ENCODE measurements at regions of chr9 and their contacts with region 1.

Region 1: GRCh38 chr9:123225374-123225813 is 43.0 kb downstream of the STRBP start:
- DNase-seq: peak; percentile 32
- H3K4me3 ChIP-seq: no peak overlapping the region
- H3K27ac ChIP-seq: no peak overlapping the region
- H3K4me1 ChIP-seq: no peaks in the 10 kb centered on the region
- H3K27me3 ChIP-seq: no peaks in the 10 kb centered on the region
- CTCF ChIP-seq: peak in 3 of 4 experiments; percentile 43 to 53 (median 48)
- POLR2A ChIP-seq: no peak

Region 2: GRCh38 chr9:123102375-123103110 is 122.9 kb before region 1 on chr9:
- intact Hi-C with region 1: loop called (anchors 5 kb)
- DNase-seq: peak; percentile 36
- H3K4me3 ChIP-seq: no peak overlapping the region
- H3K27ac ChIP-seq: no peak overlapping the region
- H3K4me1 ChIP-seq: peaks cover 5% of the 10 kb centered on the region
- H3K27me3 ChIP-seq: no peaks in the 10 kb centered on the region
- CTCF ChIP-seq: peak in 3 of 4 experiments; percentile 38 to 59 (median 51)
- POLR2A ChIP-seq: no peak

Region 3: DNA sequence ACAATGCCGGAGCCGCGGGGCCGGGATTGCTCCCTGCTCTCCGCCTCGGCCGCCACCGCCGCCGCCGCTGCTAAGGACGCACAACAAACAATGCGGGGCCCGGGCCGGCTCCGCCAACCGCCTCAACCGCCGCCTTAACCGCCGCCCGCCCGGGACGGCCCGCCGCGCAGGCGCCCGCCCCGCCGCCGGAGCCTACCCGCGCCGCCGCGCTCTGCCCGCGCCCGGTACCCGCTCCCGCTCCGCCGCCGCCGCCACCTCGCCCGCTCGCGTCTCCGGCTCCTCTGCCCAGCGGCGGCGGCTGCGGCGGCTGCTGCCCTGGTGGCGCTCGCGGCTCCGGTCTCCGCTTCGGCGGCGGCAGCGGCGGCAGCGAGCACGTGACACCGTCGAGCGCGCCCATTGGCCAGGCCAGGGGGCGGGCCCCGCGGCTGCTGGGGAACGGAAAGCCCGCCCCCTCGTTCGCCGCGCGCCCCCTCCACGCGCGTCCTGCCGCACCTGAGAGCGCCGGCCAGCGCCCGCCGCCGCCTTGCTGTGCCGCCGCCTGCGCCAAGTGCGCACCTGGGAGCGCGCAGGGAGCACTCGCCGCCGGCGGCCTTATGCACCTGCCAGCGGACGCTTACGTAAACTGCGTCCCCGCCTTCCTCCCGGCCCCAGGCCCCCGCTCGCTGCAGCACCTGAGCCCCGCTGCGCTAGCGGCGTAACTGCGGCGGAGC is 43.0 kb after region 1 on chr9 and contains the start of gene STRBP:
- intact Hi-C with region 1: no loop called
- DNase-seq: peak; percentile 90
- H3K4me3 ChIP-seq: peak within 1 kb of the TSS; percentile 79 to 83
- H3K27ac ChIP-seq: peak within 1 kb of the TSS; percentile 73 to 76
- H3K4me1 ChIP-seq: no peaks in the 10 kb centered on the region
- H3K27me3 ChIP-seq: no peaks in the 10 kb centered on the region
- CTCF ChIP-seq: peak in 2 of 4 experiments; percentile 37 to 46
- POLR2A ChIP-seq: peak; percentile 47
- total RNA-seq, gene STRBP: 20.1 to 24.5 TPM